Activated T-helper 2 cell treated with anti-CD3 and anti-CD28 coated beads, Interferon-gamma antibody, Interleukin-2, Interleukin-4, amounts not matched to agents 10 μg/mL and 5 μg/mL and 100 μg/mL, durations not matched to agents 14 hours and 24 hours and 36 hours (primary cell): ENCODE measurements at regions of chr3 and their contacts with region 1.

Region 1: DNA sequence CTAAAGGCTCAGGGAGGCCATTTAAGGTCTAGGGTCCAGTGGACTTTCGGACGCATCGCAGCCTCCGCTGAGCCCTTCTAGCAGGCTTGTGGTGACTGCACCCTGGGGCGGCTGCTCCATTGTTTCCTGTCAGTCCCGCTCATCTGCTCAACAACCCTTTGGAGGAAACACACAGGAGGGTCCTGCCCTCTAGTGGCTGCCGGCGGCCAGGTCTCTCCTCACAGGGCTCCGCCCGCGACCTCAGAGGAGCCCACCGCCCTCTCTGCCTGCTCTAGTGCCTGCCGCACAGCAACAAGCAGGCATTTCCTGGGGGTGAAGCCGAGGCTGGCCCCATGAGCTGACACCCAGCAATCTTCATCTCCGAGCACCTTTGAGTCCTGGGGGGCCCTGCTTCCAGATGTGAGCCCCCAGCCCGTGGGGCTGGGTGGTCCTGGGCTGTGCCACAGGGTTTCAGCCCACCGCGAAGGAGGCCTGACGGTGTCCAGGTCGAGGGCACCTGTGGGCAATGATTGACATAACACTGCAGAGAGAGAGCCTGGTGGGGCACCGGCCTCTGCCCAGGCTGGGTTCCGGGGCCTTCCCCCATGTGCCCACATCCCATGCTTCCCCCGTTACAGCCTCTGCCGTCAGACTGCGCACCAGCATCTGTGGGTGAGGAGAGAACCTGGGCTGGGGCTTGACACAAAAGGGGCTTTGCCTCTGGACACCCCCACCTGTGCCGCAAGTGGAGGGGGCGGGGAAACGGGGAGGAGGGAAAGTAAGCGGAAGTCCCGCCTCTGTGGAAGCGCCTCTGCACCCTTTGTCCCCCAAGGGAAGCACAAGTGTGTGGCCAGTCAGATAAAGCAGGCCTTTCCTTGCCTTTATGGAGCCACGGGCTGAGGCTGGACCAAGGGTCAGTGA is 27.0 kb upstream of the SFMBT1 start:
- DNase-seq: peak; percentile 85
- H3K4me3 Mint-ChIP-seq: peak overlapping the region; percentile 90
- H3K27ac Mint-ChIP-seq: peak overlapping the region; percentile 91
- H3K4me1 Mint-ChIP-seq: peaks cover 13% of the 10 kb centered on the region
- H3K27me3 Mint-ChIP-seq: no peaks in the 10 kb centered on the region

Region 2: DNA sequence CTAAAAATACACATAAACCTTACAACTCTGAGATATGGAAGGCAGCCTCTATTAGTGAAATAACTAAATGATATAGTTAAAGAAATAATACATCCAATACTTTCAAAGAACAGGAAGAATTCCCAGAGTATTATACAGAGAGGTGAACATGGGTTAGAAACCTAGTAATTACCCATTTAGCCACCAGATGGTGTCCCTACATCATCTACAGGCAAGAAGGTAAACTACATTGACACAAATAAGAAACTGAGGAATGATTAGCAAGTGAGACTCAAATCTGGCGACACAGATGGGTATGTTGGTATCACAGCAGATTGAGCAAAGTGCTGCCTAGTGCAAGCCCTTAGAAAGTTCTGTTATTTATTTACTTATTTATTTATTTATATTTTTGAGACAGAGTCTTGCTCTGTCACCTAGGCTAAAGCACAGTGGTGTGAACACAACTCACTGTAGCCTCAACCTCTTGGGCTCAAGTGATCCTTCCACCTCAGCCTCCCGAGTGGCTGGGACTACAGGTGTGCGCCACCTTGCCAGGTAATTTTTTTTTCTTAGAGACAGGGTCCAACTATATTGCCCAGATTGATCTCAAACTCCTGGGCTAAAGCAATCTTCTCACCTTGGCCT is 330.4 kb before region 1 on chr3:
- intact Hi-C with region 1: loop called (anchors 1 kb)
- DNase-seq: no peak
- H3K4me3 Mint-ChIP-seq: no peak overlapping the region
- H3K27ac Mint-ChIP-seq: no peak overlapping the region
- H3K4me1 Mint-ChIP-seq: no peaks in the 10 kb centered on the region
- H3K27me3 Mint-ChIP-seq: no peaks in the 10 kb centered on the region

Region 3: DNA sequence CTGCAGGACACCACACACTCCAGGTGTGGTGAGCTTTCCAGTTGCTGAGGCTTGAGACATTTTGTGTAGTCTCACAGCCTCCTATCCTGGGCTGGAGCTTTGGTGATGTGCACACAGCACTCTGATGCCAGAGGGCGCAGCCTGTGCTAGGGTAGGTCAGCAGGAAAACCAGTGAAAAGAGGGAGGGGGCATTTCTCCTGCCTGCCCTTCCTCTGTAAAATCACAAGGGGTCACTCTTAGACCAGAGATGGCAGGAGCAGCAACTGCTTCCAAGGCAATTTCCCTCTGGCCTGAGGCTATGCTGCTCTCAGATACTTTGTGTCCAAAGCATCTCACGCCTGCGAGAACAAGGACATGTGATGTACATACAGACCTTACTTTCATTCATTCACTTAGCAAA is 221.6 kb before region 1 on chr3:
- intact Hi-C with region 1: loop called (anchors 1 kb)
- DNase-seq: no peak
- H3K4me3 Mint-ChIP-seq: no peak overlapping the region
- H3K27ac Mint-ChIP-seq: no peak overlapping the region
- H3K4me1 Mint-ChIP-seq: no peaks in the 10 kb centered on the region
- H3K27me3 Mint-ChIP-seq: no peaks in the 10 kb centered on the region

Region 4: DNA sequence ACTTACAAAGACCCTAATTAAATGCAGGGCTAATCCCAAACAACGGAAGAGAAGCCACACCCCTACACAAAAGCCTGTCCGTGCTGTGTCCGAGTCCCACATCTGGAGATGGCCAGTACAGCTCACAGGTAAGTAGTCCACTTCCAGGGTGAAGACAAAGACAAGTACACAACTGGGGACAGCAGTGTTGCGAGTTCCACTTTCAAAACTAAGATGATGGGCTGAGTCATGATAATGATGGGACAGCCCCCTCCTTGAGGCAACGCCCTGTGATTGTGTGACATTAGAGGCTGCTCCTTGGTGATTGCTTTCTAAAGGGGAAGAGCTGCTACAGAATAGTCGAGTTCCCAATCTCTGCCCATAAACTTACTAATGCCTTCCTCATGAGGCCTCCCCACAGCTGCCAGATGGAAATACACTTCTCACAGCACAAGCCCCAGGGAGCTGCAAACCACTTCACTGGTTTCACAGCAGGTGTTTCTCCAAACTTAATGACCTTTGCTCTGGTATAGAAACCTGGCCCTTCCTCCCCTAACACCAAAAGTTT is 29.8 kb after region 1 on chr3:
- intact Hi-C with region 1: loop called (anchors 1 kb)
- DNase-seq: peak; percentile 59
- H3K4me3 Mint-ChIP-seq: peak overlapping the region; percentile 71
- H3K27ac Mint-ChIP-seq: peak overlapping the region; percentile 88
- H3K4me1 Mint-ChIP-seq: peaks cover 54% of the 10 kb centered on the region
- H3K27me3 Mint-ChIP-seq: no peaks in the 10 kb centered on the region

Region 5: DNA sequence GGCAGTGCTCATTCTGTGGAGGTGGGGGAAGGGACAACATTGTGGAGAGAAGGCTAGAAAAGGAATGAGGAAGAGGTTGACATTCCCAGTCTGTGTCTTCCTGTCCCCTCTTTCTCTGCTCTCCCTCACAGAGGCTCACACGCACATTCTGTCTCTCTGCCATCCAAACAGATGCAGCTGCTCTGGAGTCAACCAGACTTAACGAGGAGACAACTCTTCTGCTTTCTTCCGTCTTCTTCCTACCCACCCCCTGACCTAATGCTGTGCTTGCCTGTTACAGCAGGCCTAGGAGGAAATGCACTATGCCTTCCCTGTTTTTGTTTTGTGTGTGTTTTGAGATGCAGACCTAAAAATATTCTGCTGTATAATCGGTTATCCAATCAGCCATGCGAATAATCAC is 543.4 kb after region 1 on chr3:
- intact Hi-C with region 1: no loop called
- DNase-seq: no peak
- H3K4me3 Mint-ChIP-seq: no peak overlapping the region
- H3K27ac Mint-ChIP-seq: no peak overlapping the region
- H3K4me1 Mint-ChIP-seq: no peaks in the 10 kb centered on the region
- H3K27me3 Mint-ChIP-seq: peaks cover 32% of the 10 kb centered on the region